Prostate gland (tissue), 2 donors: ENCODE measurements at regions of chrX and their contacts with region 1.

Region 1: DNA sequence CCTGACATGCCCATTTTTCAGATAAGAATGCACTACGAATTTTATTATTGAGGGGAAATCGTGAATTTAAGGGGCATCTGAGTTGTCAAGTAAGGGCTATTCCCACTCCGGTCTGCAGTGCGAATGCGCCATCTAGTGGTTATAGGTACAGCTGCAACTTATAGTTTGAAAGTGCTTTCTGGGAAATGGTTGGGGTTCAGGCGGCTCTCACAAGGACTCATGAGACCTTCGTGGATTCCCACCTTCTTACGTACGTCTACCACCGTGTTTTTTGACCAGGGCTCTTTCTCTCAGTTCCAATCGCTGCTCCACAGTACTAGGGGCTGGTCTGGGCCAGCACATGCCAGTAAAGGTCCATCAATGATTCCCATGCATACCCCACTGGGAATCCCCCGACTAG is 12.3 kb downstream of the MSL3 start:
- DNase-seq: peak; percentile 14
- H3K4me3 ChIP-seq: no peak overlapping the region
- H3K27ac ChIP-seq: no peak overlapping the region
- H3K4me1 ChIP-seq: no peaks in the 10 kb centered on the region
- H3K27me3 ChIP-seq: no peaks in the 10 kb centered on the region
- CTCF ChIP-seq: peak; percentile 21 to 72 (median 62)
- POLR2A ChIP-seq: no peak

Region 2: GRCh38 chrX:11724122-11725017 is 46.0 kb before region 1 on chrX:
- intact Hi-C with region 1: loop called (anchors 5 kb)
- DNase-seq: peak; percentile 4
- H3K4me3 ChIP-seq: no peak overlapping the region
- H3K27ac ChIP-seq: no peak overlapping the region
- H3K4me1 ChIP-seq: no peaks in the 10 kb centered on the region
- H3K27me3 ChIP-seq: no peaks in the 10 kb centered on the region
- CTCF ChIP-seq: peak; percentile 14 to 63 (median 44)
- POLR2A ChIP-seq: no peak